Mammary epithelial cell (primary cell): ENCODE measurements at regions of chr10 and their contacts with region 1.

Region 1: DNA sequence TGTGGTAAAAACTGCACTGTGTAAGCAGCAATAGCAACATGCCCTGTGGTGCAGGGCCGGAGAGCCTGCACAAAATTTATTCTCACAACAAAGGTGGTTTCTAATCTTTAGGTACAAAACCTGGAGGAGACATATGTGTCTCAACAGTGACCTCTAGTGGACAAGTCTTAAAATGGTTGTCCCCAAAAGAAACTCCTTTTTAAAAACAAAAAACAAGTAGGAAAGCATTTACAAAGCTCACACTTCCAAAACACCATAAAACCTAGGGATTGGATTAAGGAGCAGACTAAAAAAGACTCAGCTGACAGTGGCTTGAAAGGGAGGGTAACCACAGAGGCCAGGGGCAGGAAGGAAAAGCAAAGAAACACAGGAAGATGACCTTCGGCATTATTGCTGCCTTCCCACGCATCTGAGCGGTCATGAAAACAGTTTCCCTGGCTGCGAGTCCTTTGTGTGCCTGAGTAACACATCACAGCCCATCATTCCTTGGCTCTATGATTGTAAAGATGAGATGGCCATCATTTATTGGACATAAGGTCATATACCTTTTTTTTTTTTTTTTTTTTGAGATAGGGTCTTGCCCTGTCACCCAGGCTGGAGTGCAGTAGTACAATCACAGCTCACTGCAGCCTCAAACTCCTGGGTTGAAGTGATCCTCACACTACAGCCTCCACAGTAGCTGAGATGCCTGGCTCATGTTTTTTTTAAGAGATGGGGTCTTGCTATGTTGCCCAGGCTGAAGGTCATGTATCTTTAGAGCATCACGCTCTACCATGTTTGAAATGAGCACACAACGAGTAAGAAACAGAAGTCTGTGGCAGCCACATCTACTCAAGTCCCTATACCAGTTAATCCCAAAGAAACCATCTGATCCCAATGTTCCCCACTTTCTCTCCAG is 39.5 kb downstream of the RSU1 start:
- DNase-seq: peak; percentile 26
- H3K4me3 ChIP-seq: peak overlapping the region in 1 of 3 experiments; percentile 3
- H3K27ac ChIP-seq: no peak overlapping the region
- H3K4me1 ChIP-seq: peaks cover 3% of the 10 kb centered on the region
- H3K27me3 ChIP-seq: no peaks in the 10 kb centered on the region
- CTCF ChIP-seq: peak; percentile 63 to 71

Region 2: DNA sequence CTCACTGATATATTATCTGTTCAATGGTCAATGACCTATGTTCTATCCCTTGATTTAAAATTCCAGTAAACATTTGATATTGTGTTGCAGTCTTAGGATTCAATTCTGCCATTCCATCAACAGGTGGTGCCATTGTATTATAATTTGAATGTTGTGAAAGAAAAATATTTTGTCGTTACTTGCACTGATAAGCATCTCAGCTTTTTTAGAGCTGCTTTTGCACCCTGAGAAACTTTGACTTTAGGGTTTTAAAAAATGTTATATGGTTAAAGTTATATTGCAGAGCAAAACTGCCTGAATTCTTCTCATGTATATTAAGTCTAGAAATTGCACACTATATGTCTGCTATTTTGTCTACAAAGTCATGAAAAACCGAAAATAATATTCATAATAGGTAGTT is 898.7 kb before region 1 on chr10:
- CTCF ChIA-PET with region 1: no interaction called
- dilution Hi-C with region 1: no loop called
- in situ Hi-C with region 1: loop called (anchors 25 kb)
- intact Hi-C with region 1: loop called (anchors 1 kb)
- DNase-seq: no peak
- H3K4me3 ChIP-seq: no peak overlapping the region
- H3K27ac ChIP-seq: no peak overlapping the region
- H3K4me1 ChIP-seq: no peaks in the 10 kb centered on the region
- H3K27me3 ChIP-seq: no peaks in the 10 kb centered on the region
- CTCF ChIP-seq: peak; percentile 68 to 74

Region 3: DNA sequence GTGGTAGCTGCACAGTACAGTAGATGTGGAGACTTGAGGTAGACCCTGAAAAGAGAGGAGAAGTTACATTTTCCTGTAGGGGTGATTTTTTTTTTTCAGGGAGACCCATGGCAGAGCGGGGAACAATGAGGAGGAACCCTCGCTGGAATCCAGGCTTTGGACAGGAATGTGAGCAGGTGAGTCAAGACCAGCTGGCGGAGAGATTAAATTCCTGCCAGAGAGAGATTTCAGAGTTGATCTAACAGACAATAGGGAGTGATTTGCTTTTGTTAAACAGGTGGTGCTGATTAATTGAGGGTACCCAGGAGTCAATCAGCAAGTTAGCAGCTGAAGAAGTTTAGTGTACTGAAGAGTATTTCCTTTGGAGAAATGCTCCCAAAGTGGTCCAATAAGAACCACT is 875.8 kb before region 1 on chr10:
- CTCF ChIA-PET with region 1: no interaction called
- dilution Hi-C with region 1: no loop called
- in situ Hi-C with region 1: loop called (anchors 25 kb)
- intact Hi-C with region 1: loop called (anchors 1 kb)
- DNase-seq: no peak
- H3K4me3 ChIP-seq: no peak overlapping the region
- H3K27ac ChIP-seq: no peak overlapping the region
- H3K4me1 ChIP-seq: no peaks in the 10 kb centered on the region
- H3K27me3 ChIP-seq: no peaks in the 10 kb centered on the region
- CTCF ChIP-seq: no peak

Region 4: DNA sequence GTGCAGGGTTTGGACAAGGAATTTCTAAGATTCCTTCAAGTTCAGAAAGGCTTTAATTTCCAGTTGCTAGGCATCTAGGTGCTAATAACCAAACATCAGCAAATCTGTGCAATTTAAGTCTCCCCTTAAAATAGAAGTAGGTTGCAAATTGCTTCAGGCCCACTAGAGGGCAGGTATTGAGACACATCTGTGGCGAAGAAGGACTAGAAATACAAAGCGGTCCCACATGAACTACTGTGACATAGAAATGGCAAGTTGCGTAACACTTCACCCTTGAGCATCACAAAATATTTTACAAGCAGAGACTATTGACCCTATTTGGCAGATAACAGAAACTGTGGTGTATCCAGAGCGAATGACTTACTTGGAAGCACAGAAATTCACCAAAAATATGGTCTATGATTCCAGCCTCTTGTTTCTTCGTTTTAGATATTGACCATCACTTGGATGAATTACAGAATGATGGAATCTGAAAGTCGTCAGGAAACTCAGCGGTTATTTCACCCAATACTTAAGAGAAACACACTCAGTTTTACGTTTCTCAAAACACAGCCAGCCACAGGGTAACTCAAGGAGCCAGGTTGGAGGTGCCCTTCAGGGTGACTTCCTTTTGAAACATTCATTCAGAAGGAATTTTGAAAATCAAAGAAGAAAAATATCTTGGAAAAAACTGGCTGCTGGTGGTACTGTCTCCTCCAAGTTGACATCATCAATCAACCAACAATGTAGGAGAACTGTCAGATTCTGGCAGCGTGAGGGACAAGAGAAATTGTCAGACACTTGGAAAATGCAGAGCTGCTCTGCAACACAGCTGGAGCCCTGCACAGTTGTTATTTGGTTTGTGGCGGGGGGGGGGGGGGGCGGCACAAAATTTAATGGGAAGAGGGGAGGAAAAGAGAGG is 661.1 kb before region 1 on chr10:
- CTCF ChIA-PET with region 1: no interaction called
- dilution Hi-C with region 1: no loop called
- in situ Hi-C with region 1: no loop called
- intact Hi-C with region 1: loop called (anchors 1 kb)
- DNase-seq: peak; percentile 20
- H3K4me3 ChIP-seq: no peak overlapping the region
- H3K27ac ChIP-seq: no peak overlapping the region
- H3K4me1 ChIP-seq: no peaks in the 10 kb centered on the region
- H3K27me3 ChIP-seq: no peaks in the 10 kb centered on the region
- CTCF ChIP-seq: peak; percentile 53 to 67

Region 5: GRCh38 chr10:16545116-16545736 is 232.5 kb before region 1 on chr10:
- CTCF ChIA-PET with region 1: no interaction called
- dilution Hi-C with region 1: no loop called
- in situ Hi-C with region 1: no loop called
- intact Hi-C with region 1: loop called (anchors 5 kb)
- DNase-seq: peak; percentile 25
- H3K4me3 ChIP-seq: no peak overlapping the region
- H3K27ac ChIP-seq: no peak overlapping the region
- H3K4me1 ChIP-seq: no peaks in the 10 kb centered on the region
- H3K27me3 ChIP-seq: no peaks in the 10 kb centered on the region
- CTCF ChIP-seq: peak; percentile 79 to 82

Region 6: DNA sequence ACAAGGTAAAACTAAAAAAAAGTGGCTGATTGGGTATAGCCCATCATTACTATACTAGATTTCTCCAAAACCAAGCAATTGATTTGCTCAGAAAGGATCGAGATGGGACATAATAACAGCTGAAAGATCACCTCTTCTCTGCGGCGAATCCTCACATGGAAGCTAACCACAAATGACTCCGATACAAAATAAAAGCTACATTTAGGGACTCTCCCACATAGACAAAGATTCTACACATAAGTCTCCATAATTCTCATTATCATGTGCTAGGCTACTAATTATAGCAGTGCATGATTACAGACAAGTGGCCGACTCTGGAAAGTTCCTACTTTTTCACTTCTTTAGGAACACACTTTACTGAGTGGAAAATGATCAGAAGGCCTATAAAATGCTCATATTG is 77.4 kb before region 1 on chr10:
- CTCF ChIA-PET with region 1: no interaction called
- dilution Hi-C with region 1: no loop called
- in situ Hi-C with region 1: no loop called
- intact Hi-C with region 1: no loop called
- DNase-seq: no peak
- H3K4me3 ChIP-seq: no peak overlapping the region
- H3K27ac ChIP-seq: no peak overlapping the region
- H3K4me1 ChIP-seq: no peaks in the 10 kb centered on the region
- H3K27me3 ChIP-seq: no peaks in the 10 kb centered on the region
- CTCF ChIP-seq: no peak